ENCODE measurements at regions of chr14 and their contacts with region 1.

Region 1: DNA sequence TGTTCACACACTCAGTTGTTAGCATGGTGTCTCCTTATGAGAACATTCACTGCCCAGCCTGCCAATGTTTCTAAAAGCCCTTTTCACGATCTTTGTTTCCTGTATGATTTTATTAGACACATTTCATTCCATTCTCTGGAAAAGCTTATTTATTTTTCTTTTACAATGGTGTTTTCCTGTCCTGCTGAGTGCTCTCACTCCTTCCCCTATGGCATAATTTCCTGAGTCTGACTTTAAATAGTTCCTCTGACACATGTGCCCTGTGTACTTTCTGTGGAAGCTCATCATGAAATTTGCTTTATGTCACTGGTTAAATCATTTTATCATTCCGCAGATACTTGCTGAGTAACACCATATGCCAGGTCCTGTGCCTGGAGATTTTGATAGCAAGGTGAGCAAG is 612.0 kb downstream of the FLRT2 start:
- DNase-seq: peak; percentile 82
- H3K4me3 ChIP-seq: no peak overlapping the region
- H3K27ac ChIP-seq: peak overlapping the region; percentile 33
- H3K4me1 ChIP-seq: peaks cover 8% of the 10 kb centered on the region
- H3K27me3 ChIP-seq: no peaks in the 10 kb centered on the region
- CTCF ChIP-seq: no peak

Region 2: DNA sequence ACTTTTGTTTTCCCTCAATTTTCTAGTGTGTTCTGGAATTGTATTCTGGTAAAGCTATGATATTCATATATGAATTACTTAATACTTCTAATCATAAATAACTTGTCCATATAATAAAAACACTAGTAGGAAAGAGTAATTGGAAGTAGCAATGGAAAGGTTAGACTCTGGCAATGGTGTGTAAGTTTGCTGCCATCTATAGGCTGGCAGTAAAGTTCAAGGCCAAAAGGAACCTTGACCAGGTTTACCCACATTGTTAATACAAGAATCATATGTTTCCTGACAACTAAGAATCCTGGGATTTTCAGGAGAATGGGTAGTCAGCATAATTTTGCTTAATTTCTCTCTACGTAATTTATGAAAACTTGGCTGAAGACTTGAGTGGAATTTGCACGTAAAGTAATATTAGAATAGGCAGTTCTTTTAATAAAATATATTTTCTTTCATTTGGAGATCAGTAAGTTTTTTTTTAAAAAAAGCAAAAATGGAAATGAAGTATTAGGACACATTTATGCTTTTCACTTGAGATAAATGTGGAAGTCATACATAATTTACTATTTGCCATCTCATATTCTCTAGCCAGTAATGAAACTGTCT is 924.4 kb after region 1 on chr14:
- CTCF ChIA-PET with region 1: no interaction called
- POLR2A ChIA-PET with region 1: interaction called, 10 read pairs
- intact Hi-C with region 1: no loop called
- DNase-seq: peak; percentile 22
- H3K4me3 ChIP-seq: no peak overlapping the region
- H3K27ac ChIP-seq: no peak overlapping the region
- H3K4me1 ChIP-seq: no peaks in the 10 kb centered on the region
- H3K27me3 ChIP-seq: no peaks in the 10 kb centered on the region
- CTCF ChIP-seq: peak; percentile 67

Measured in A673 (cell line).